IMR-90 (cell line): ENCODE measurements at regions of chr5 and their contacts with region 1.

Region 1: GRCh38 chr5:127320032-127320965 is 29.7 kb downstream of the MEGF10 start:
- DNase-seq: no peak
- ATAC-seq: no peak
- H3K4me3 ChIP-seq: no peak overlapping the region
- H3K27ac ChIP-seq: no peak overlapping the region
- H3K4me1 ChIP-seq: no peaks in the 10 kb centered on the region
- H3K27me3 ChIP-seq: peaks cover 9% of the 10 kb centered on the region
- CTCF ChIP-seq: no peak
- POLR2A ChIP-seq: no peak
- RAD21 ChIP-seq: no peak

Region 2: GRCh38 chr5:126852091-126852571 is 468.2 kb before region 1 on chr5:
- CTCF ChIA-PET with region 1: no interaction called
- POLR2A ChIA-PET with region 1: no interaction called
- dilution Hi-C with region 1: no loop called
- in situ Hi-C with region 1: loop called (anchors 10 kb)
- intact Hi-C with region 1: no loop called
- DNase-seq: peak; percentile 17
- ATAC-seq: no peak
- H3K4me3 ChIP-seq: no peak overlapping the region
- H3K27ac ChIP-seq: no peak overlapping the region
- H3K4me1 ChIP-seq: peaks cover 2% of the 10 kb centered on the region; the same call in 1 of the 2 replicates
- H3K27me3 ChIP-seq: no peaks in the 10 kb centered on the region
- CTCF ChIP-seq: no peak
- POLR2A ChIP-seq: no peak
- RAD21 ChIP-seq: no peak

Region 3: DNA sequence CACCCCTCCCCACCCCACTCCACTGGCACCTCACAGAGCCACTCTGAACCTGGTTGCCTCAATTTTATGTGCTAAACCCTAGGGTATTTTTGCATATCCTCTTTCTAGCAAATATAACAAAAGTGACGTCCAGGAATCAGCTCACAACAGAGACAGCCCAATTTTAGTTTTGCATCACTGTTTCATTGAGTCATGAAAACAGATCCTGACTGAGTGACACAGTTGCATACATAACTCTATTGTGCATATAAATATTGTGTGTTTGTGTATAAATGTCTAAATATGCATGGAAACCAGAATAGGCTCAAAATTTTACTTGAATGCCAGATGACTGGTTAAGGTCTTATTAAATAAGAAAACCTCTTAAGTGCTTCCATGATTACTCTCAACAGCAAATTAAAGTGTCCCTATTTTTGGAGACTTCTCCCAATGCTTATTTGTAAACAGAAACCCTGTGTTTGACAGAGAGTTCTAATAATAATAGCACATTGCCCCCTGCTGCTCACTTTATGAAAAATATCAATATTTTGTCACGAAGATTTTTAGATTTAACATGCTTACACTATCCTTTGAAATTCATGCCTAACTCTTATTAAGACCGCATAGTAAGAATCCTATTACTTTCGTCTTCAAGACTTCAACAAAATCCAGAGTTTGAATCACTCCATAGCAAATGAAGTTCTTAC is 121.6 kb after region 1 on chr5:
- CTCF ChIA-PET with region 1: no interaction called
- POLR2A ChIA-PET with region 1: no interaction called
- dilution Hi-C with region 1: no loop called
- in situ Hi-C with region 1: no loop called
- intact Hi-C with region 1: no loop called
- DNase-seq: peak; percentile 2
- ATAC-seq: no peak
- H3K4me3 ChIP-seq: no peak overlapping the region
- H3K27ac ChIP-seq: no peak overlapping the region
- H3K4me1 ChIP-seq: no peaks in the 10 kb centered on the region
- H3K27me3 ChIP-seq: peaks cover 7% of the 10 kb centered on the region
- CTCF ChIP-seq: peak; percentile 42
- POLR2A ChIP-seq: no peak
- RAD21 ChIP-seq: peak; percentile 36; the same call in 1 of the 2 replicates